AG04449 (cell line): ENCODE measurements at regions of chr11 and their contacts with region 1.

Region 1: DNA sequence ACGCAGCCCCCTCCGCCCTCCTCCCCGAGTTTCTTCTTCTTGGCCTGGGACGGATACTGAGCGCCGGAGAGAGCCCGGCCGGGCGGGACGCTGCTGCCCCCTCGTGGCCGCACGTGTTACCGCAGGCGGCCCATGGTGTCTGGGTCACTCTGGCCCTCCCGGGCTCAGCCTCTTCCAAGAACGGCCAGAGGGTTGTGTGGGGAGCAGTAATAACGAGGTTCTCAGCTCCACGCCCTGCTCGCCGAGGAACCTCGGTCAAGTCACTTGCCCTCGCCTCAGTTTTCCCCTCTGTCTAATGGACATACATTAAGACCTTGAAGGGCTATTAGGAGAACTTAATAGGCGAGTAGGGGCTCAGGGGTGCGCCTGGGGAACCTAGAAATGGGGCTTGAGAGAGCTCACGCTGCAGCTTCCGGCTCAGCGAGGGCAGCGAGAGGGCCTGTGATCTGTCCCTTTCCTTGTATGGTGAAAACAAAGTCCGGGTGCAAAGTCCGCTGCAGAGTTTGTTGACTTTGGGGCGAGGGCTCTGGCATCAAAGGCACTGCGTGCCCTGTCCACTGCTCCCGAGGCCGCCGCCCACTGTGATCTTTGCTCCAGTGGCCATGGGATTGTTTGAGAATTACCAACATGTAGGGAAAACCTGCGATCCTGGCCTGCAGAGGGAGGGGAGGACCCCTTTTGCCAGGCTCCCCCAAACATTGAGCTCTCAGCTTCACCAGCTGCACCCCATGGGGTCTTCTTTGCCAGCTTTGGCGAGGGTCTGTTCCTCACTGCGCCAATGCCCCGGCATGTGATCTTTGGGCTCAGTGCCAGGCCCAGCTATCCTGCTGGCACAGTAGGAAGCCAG is 14.4 kb upstream of the LRP5 start:
- DNase-seq: no peak
- H3K4me3 ChIP-seq: no peak overlapping the region
- CTCF ChIP-seq: peak; percentile 98

Region 2: DNA sequence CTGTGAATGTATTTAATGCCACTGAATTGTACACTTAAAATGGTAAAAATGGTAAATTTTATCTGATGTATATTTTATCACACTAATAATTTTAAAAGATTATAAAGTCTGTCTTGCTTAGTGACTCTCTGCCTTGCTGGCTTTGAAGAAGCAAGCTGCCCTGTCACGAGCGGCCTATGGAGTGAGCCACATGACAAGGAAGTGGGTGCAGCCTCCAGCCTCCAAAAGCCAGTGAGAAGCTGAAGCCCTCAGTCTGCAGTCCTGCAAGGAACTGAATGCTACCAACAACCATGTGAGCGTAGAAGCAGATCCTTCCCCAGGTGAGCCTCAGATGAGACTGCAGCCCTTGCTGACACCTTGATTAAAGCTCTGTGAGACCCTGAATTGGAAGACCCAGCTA is 46.3 kb before region 1 on chr11:
- CTCF ChIA-PET with region 1: interaction called, 150 read pairs
- POLR2A ChIA-PET with region 1: interaction called, 7 read pairs
- DNase-seq: no peak
- H3K4me3 ChIP-seq: no peak overlapping the region
- CTCF ChIP-seq: no peak

Region 3: GRCh38 chr11:68271781-68272608 is 26.0 kb before region 1 on chr11 and contains the start of gene C11orf24:
- CTCF ChIA-PET with region 1: interaction called, 71 read pairs
- POLR2A ChIA-PET with region 1: no interaction called
- DNase-seq: peak; percentile 53
- H3K4me3 ChIP-seq: peak within 1 kb of the TSS; percentile 95
- CTCF ChIP-seq: no peak

Region 4: DNA sequence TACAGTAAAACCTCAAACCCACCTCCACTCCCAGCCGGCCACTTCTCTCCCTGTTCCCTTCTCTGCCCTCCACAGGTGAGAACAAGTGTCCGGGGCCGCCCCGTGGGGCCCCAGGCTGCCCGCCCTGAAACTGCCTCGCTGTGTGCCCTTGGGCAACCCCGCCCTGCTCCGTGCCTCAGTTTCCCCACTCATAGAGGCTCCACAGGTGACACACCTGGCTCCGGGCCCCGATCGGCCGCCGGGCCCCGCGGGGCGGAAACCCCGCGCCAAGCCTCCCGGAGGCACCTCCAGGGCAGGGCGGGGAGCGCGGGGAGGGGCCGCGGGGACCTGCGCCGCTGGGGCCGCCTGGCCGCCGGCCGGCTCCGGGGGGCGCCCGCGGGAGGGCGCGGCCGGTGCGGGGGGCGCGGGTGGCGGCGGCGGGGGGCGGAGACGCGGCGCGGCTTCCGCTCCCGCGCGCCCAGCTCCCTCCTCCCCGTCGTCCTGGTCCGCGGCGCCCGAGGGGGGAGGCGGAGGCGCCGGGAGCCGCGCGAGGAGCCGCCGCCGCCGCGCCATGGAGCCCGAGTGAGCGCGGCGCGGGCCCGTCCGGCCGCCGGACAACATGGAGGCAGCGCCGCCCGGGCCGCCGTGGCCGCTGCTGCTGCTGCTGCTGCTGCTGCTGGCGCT is 14.2 kb after region 1 on chr11 and contains the start of gene LRP5:
- CTCF ChIA-PET with region 1: interaction called, 37 read pairs
- POLR2A ChIA-PET with region 1: no interaction called
- DNase-seq: no peak
- H3K4me3 ChIP-seq: peak within 1 kb of the TSS; percentile 74
- CTCF ChIP-seq: no peak

Region 5: GRCh38 chr11:68328374-68329091 is 30.5 kb after region 1 on chr11:
- CTCF ChIA-PET with region 1: interaction called, 18 read pairs
- POLR2A ChIA-PET with region 1: no interaction called
- DNase-seq: no peak
- H3K4me3 ChIP-seq: no peak overlapping the region
- CTCF ChIP-seq: no peak

Region 6: GRCh38 chr11:68383976-68384501 is 86.0 kb after region 1 on chr11:
- CTCF ChIA-PET with region 1: interaction called, 47 read pairs
- POLR2A ChIA-PET with region 1: no interaction called
- DNase-seq: no peak
- H3K4me3 ChIP-seq: no peak overlapping the region
- CTCF ChIP-seq: peak; percentile 91

Region 7: GRCh38 chr11:68677432-68677831 is 379.4 kb after region 1 on chr11:
- CTCF ChIA-PET with region 1: no interaction called
- POLR2A ChIA-PET with region 1: no interaction called
- DNase-seq: peak; percentile 3
- H3K4me3 ChIP-seq: no peak overlapping the region
- CTCF ChIP-seq: no peak